ENCODE measurements at regions of chr3 and their contacts with region 1.

Region 1: GRCh38 chr3:99645277-99646106 is 7.1 kb downstream of the COL8A1 start:
- DNase-seq: peak; percentile 18
- ATAC-seq: peak; percentile 86
- H3K4me3 ChIP-seq: no peak overlapping the region
- H3K27ac ChIP-seq: no peak overlapping the region
- H3K4me1 ChIP-seq: no peaks in the 10 kb centered on the region
- H3K27me3 ChIP-seq: peaks cover 81% of the 10 kb centered on the region
- CTCF ChIP-seq: peak; percentile 78 to 95 (median 94)
- POLR2A ChIP-seq: no peak
- RAD21 ChIP-seq: peak; percentile 37; the same call in 1 of the 2 replicates

Region 2: DNA sequence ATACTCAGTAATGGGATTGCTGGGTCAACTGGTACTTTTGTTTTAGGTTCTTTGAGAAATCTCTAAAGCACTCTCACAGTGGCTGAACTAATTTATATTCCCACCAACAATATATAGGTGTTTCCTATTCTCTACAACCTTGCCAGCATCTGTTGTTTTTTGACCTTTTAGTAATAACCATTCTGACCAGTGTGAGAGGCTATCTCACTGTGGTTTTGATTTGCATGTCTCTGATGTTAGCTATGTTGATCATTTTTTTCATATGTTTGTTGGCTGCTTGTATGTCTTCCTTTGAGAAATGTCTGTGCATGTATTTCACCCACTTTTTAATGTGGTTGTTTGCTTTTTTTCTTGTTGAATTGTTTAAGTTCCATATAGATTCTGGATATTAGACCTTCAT is 645.8 kb before region 1 on chr3:
- CTCF ChIA-PET with region 1: no interaction called
- POLR2A ChIA-PET with region 1: no interaction called
- RAD21 ChIA-PET with region 1: no interaction called
- intact Hi-C with region 1: no loop called
- DNase-seq: no peak
- ATAC-seq: no peak
- H3K4me3 ChIP-seq: no peak overlapping the region
- H3K27ac ChIP-seq: no peak overlapping the region
- H3K4me1 ChIP-seq: no peaks in the 10 kb centered on the region
- H3K27me3 ChIP-seq: no peaks in the 10 kb centered on the region
- CTCF ChIP-seq: no peak
- POLR2A ChIP-seq: no peak
- RAD21 ChIP-seq: no peak

Region 3: GRCh38 chr3:99656624-99657023 is 11.1 kb after region 1 on chr3:
- CTCF ChIA-PET with region 1: interaction called, 19 read pairs
- POLR2A ChIA-PET with region 1: no interaction called
- RAD21 ChIA-PET with region 1: no interaction called
- intact Hi-C with region 1: no loop called
- DNase-seq: no peak
- ATAC-seq: no peak
- H3K4me3 ChIP-seq: no peak overlapping the region
- H3K27ac ChIP-seq: no peak overlapping the region
- H3K4me1 ChIP-seq: no peaks in the 10 kb centered on the region
- H3K27me3 ChIP-seq: peaks cover 64% of the 10 kb centered on the region
- CTCF ChIP-seq: no peak
- POLR2A ChIP-seq: no peak
- RAD21 ChIP-seq: no peak

Region 4: DNA sequence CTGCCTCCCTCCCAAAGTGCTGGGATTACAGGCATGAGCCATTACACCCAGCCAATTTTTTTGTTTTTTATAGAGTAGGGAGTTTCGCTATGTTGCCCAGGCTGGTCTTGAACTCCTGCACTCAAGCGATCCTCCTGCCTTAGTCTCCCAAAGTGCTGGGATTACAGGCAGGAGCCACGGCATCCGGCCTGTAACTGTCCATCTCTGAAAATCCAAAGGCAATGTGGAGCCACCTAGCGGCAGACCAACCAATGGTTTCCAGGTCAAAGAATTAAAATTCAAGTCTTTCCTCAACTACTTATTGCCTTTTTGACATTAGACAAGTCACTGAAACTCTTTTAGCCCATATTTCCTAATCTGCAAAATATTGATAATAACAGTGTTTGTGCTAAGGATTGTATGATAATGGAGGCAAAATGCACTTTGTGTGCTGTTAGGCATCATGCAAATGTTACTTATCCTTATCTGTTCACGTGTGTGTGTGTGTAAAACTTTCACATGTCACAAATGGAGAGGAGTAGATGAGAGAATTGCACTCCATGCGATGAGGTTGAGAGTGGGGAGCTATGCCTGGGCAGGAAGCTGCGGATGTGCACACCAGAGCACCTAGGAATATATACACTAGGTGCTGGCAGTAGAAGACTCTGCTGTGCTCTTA is 41.6 kb after region 1 on chr3:
- CTCF ChIA-PET with region 1: interaction called, 11 read pairs
- POLR2A ChIA-PET with region 1: no interaction called
- RAD21 ChIA-PET with region 1: no interaction called
- intact Hi-C with region 1: loop called (anchors 5 kb)
- DNase-seq: peak; percentile 51
- ATAC-seq: peak; percentile 95
- H3K4me3 ChIP-seq: no peak overlapping the region
- H3K27ac ChIP-seq: no peak overlapping the region
- H3K4me1 ChIP-seq: no peaks in the 10 kb centered on the region
- H3K27me3 ChIP-seq: peaks cover 49% of the 10 kb centered on the region
- CTCF ChIP-seq: peak; percentile 40 to 71 (median 70); a peak in 5 of 6 replicates
- POLR2A ChIP-seq: no peak
- RAD21 ChIP-seq: peak; percentile 67

Region 5: GRCh38 chr3:99747915-99748314 is 102.4 kb after region 1 on chr3:
- CTCF ChIA-PET with region 1: interaction called, 10 read pairs
- POLR2A ChIA-PET with region 1: no interaction called
- RAD21 ChIA-PET with region 1: no interaction called
- intact Hi-C with region 1: loop called (anchors 2 kb)
- DNase-seq: peak; percentile 6
- ATAC-seq: peak; percentile 93
- H3K4me3 ChIP-seq: no peak overlapping the region
- H3K27ac ChIP-seq: no peak overlapping the region
- H3K4me1 ChIP-seq: no peaks in the 10 kb centered on the region
- H3K27me3 ChIP-seq: peaks cover 38% of the 10 kb centered on the region
- CTCF ChIP-seq: peak; percentile 9 to 40 (median 39); a peak in 4 of 6 replicates
- POLR2A ChIP-seq: no peak
- RAD21 ChIP-seq: peak; percentile 52

Region 6: DNA sequence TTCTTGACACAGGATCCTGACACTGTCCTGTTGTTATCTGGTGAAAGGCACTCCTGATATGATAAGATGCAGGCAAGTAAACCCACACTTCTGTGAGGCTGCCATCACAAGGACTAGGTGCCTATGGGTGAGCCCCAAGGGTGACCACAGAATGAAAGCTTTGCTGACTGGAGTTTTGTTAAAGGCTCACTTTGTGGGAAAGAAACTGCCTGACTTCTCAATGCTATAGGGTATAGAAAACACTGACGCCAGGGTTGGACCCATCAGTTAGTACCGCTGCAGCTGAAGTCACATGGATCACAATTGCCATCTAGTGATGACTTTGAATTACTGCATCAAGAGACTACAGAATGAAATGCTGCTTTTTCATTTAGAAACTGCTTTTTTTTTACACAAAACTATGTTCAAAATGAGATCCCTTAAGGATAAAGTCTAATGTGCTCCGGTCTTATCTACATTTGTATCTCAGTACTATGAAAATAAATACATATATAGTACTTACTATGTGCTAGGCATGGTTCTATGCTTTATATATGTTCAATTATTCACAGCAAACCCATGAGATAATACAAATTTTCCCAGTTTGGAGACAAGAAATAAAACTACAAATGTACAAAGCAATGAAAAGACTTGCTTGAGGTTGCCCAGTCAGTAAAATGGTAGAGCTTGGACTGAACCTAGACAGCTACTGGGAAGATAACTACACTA is 107.9 kb after region 1 on chr3:
- CTCF ChIA-PET with region 1: interaction called, 10 read pairs
- POLR2A ChIA-PET with region 1: no interaction called
- RAD21 ChIA-PET with region 1: no interaction called
- intact Hi-C with region 1: loop called (anchors 2 kb)
- DNase-seq: peak; percentile 28
- ATAC-seq: peak; percentile 92
- H3K4me3 ChIP-seq: no peak overlapping the region
- H3K27ac ChIP-seq: no peak overlapping the region
- H3K4me1 ChIP-seq: no peaks in the 10 kb centered on the region
- H3K27me3 ChIP-seq: peaks cover 66% of the 10 kb centered on the region
- CTCF ChIP-seq: peak; percentile 37 to 76 (median 68); a peak in 5 of 6 replicates
- POLR2A ChIP-seq: no peak
- RAD21 ChIP-seq: peak; percentile 76

Region 7: GRCh38 chr3:99789011-99789721 is 143.7 kb after region 1 on chr3:
- CTCF ChIA-PET with region 1: interaction called, 3 read pairs
- POLR2A ChIA-PET with region 1: no interaction called
- RAD21 ChIA-PET with region 1: no interaction called
- intact Hi-C with region 1: loop called (anchors 1 kb)
- DNase-seq: peak; percentile 57
- ATAC-seq: peak; percentile 100
- H3K4me3 ChIP-seq: no peak overlapping the region
- H3K27ac ChIP-seq: no peak overlapping the region
- H3K4me1 ChIP-seq: no peaks in the 10 kb centered on the region
- H3K27me3 ChIP-seq: peaks cover 14% of the 10 kb centered on the region; the same call in 1 of the 2 replicates
- CTCF ChIP-seq: peak; percentile 53 to 76 (median 68); a peak in 5 of 6 replicates
- POLR2A ChIP-seq: no peak
- RAD21 ChIP-seq: peak; percentile 68